ENCODE measurements at regions of chr1 and their contacts with region 1.

Region 1: GRCh38 chr1:107782217-107782845 is 182.6 kb downstream of the VAV3 start:
- DNase-seq: peak in 1 of 2 donors; percentile 70
- ATAC-seq: peak in 7 of 8 donors; percentile 39 to 82 (median 71)
- H3K4me3 ChIP-seq: no peak overlapping the region
- H3K27ac ChIP-seq: peak overlapping the region in 1 of 10 donors; percentile 6
- H3K4me1 ChIP-seq: peaks cover 0 to 30% (median 9%) of the 10 kb centered on the region in 9 donors
- H3K27me3 ChIP-seq: no peaks in the 10 kb centered on the region
- CTCF ChIP-seq: peak; percentile 48 to 87 (median 76)

Region 2: DNA sequence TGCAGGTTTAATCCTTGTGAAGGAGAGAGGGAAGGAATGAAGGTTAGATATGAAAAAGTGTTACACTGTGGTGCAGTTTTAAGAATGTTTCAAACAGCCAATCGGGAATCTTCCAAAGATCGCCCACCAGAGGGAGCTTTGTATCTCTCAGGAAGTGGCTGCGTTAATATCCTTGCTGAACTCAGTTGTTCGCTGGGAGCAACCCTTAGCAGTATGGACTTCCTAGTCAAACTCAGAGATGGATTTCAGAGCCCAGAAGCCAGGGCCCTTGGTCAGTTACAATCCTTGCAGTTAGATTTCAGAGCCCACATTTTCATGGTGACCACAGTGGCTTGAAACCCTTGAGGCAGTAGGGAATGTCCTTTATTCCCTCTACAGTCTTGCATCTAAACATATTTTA is 505.3 kb before region 1 on chr1:
- intact Hi-C with region 1: no loop called
- DNase-seq: peak in 1 of 2 donors; percentile 5
- ATAC-seq: no peak
- H3K4me3 ChIP-seq: no peak overlapping the region
- H3K27ac ChIP-seq: no peak overlapping the region
- H3K4me1 ChIP-seq: no peaks in the 10 kb centered on the region
- H3K27me3 ChIP-seq: no peaks in the 10 kb centered on the region
- CTCF ChIP-seq: peak in 7 of 9 donors; percentile 21 to 49 (median 33)

Region 3: DNA sequence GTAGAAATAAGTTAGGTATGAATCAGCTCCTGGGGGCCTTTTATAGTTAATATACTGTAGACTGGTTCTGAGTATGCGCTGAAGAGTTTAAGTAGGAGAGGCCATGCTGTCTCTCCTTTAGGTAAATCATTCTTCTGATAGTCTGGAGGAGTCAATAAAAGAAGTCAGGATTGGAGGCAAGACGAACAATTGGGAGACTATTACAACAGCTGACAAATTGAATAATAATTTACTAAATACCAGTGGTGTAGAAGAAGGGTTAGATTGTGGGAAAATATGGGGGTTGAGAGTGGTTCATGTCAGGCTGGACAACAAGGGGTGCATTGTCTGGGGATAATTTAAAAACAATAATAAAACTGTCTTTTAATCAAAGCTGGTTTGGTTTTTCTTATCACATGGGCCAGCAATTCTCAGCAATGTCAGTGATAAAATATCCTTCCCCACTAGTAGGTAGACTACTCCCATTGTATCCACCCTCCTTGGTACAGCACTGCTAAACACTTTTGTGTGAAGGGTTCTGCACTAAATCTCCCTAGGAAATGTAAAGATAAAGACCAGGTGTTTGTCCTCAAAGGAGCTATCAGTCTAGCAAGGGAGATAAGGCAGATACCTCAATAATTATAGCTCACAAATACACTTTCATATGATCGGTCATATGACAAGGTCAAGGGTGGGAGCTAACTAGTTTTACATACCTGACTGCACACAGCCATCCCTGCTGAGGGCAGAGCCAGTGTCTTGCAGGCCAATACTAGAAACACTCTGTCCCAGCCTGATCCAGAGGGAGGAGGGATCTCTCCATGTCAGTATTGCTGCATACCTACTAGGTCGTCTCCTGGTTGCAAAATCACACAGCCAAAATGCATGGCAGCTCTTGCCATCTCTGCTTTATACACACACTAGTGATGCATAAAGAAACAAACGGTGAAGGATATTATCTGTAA is 117.1 kb before region 1 on chr1:
- intact Hi-C with region 1: no loop called
- DNase-seq: no peak
- ATAC-seq: no peak
- H3K4me3 ChIP-seq: no peak overlapping the region
- H3K27ac ChIP-seq: no peak overlapping the region
- H3K4me1 ChIP-seq: peaks cover 0 to 4% (median 0%) of the 10 kb centered on the region in 9 donors
- H3K27me3 ChIP-seq: no peaks in the 10 kb centered on the region
- CTCF ChIP-seq: no peak

Region 4: DNA sequence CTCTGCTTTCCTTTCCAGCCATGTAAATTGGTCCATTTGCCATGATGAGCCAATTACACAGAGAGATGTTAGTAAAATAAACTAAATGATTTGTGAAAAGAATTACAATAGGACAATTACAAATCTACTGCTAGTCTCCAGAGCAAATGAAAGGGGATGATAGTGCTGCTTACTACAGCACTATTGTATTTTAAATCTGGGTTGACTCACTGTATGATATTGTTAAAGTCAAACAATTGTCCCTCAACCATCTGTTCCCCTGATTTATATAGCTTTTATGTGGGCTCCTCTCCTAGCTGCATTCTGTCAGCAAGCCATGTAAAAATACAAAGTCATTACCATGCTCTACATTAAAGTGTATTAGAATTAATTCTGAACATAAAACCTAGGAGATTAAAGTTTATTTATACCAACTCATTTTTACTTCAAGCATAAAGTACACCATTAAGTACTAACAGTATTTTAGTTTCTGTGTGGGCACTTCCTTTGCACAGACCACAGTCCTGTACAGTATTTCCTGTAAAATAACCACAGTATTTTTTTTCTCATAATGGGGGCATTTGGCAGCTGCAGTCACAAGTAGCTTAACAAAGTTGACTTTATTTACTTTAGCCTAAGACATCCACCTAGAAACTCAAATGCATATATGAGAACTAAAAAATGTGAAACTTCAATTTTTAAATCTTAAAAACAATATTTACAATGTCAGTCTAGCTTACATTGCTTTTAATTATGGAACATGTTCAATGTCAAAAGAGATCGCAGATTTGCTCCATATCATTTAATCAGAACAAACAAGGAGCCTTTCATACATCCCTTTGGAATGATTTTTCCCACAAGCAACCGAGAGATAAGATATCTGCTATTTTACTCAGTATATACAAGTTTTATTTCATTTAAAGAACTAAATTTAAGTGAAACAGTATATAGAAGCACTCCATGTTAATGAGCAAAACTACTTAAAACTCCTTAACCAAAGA is 47.0 kb after region 1 on chr1:
- intact Hi-C with region 1: loop called in 1 of 10 experiments (anchors 5 kb)
- DNase-seq: no peak
- ATAC-seq: peak in 1 of 8 donors; percentile 41
- H3K4me3 ChIP-seq: no peak overlapping the region
- H3K27ac ChIP-seq: peak overlapping the region in 3 of 10 donors; percentile 22 to 66 (median 59)
- H3K4me1 ChIP-seq: peaks cover 0 to 46% (median 8%) of the 10 kb centered on the region in 9 donors
- H3K27me3 ChIP-seq: no peaks in the 10 kb centered on the region
- CTCF ChIP-seq: no peak

Region 5: DNA sequence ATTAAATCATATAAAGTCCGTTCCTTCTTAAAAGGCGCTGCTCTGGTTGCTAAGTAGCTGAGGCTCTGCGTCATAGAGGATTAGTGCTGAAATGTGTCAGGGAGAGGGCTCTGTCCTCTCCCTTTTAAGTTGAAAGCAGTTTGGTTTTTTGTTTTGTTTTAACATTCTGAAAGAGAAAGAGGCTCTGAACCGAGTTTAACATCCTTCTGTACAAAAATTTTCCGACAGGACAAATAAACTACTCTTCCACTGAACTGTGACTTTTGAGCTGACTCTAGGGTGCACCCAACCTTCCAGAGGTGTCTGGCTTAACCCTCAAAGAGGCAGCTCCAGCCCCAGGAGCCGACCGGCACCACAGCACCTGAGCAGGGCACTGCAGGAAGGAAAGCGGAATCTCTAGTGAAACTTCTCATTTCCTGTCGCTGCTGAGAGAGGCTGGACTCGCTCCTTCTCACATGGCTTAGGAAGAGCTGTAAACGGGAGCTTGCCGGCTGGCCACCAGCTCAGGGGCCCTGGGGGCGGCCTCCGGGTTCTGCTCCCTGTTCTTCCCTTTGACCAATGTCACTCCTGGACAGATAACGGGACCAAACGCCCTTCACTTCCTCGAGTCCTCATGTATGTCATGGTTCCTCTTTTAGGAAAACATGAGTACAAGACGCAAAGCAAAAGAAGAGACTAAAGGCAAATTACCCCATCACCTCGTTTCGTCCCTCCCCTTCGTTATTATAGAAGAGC is 181.4 kb after region 1 on chr1:
- intact Hi-C with region 1: loop called in 5 of 10 experiments (anchors 5 to 10 kb)
- DNase-seq: peak; percentile 19
- ATAC-seq: peak; percentile 19 to 71 (median 58)
- H3K4me3 ChIP-seq: peak overlapping the region; percentile 40 to 84 (median 66)
- H3K27ac ChIP-seq: peak overlapping the region; percentile 39 to 88 (median 71)
- H3K4me1 ChIP-seq: peaks cover 0 to 31% (median 13%) of the 10 kb centered on the region in 9 donors
- H3K27me3 ChIP-seq: peaks cover 0 to 12% (median 0%) of the 10 kb centered on the region in 7 donors
- CTCF ChIP-seq: no peak

Region 6: GRCh38 chr1:108057541-108057940 is 275.2 kb after region 1 on chr1:
- intact Hi-C with region 1: loop called in 1 of 10 experiments (anchors 10 kb)
- DNase-seq: peak; percentile 20 to 60
- ATAC-seq: peak in 6 of 8 donors; percentile 52 to 70 (median 58)
- H3K4me3 ChIP-seq: no peak overlapping the region
- H3K27ac ChIP-seq: peak overlapping the region in 1 of 10 donors; percentile 67
- H3K4me1 ChIP-seq: peaks cover 0 to 57% (median 16%) of the 10 kb centered on the region in 9 donors
- H3K27me3 ChIP-seq: no peaks in the 10 kb centered on the region
- CTCF ChIP-seq: no peak